Sciatic nerve (tissue), 2 donors: ENCODE measurements at regions of chr3 and their contacts with region 1.

Region 1: DNA sequence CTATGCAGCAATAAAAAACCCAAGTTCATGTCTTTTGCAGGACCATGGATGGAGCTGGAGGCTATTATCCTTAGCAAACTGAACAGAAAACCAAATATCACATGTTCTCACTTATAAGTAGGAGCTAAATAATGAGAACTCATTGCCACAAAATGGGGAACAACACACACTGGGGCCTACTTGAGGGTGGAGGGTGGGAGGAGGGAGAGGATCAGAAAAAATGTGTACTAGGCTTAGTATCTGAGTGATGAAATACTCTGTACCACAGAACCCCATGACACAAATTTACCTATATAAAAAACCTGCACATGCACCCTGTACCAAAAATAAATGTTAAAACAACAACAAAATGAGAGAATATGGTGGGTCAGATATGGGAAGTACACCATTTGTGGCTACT is 49.6 kb upstream of the AADACL2 start:
- DNase-seq: no peak
- ATAC-seq: no peak

Region 2: DNA sequence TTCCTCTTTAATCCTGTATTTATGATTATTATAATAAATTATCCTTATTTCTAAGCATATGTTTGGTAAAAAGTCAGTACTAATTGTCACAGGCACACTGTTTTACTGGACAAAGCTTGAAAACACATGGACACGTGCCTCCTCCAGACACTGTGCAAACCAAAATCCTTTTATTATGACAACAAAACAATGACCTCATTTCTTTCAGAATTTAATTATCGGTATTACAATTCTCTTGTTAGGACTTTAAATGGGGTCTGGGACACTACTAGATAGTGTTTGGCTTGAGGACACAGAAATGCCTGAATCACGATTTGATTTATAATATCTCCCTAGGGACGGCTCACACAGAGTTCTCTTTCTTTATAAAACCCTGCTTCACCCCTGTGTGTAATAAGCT is 115.9 kb before region 1 on chr3:
- intact Hi-C with region 1: no loop called
- DNase-seq: no peak
- ATAC-seq: peak; percentile 78

Region 3: GRCh38 chr3:151806838-151807237 is 122.7 kb after region 1 on chr3:
- intact Hi-C with region 1: loop called (anchors 5 kb)
- DNase-seq: no peak
- ATAC-seq: no peak